ENCODE measurements at regions of chr10 and their contacts with region 1.

Region 1: GRCh38 chr10:17905491-17905890 is 46.2 kb upstream of the SLC39A12 start:
- DNase-seq: no peak
- H3K4me3 Mint-ChIP-seq: no peak overlapping the region
- H3K27ac Mint-ChIP-seq: no peak overlapping the region
- H3K4me1 Mint-ChIP-seq: no peaks in the 10 kb centered on the region
- H3K27me3 Mint-ChIP-seq: no peaks in the 10 kb centered on the region

Region 2: GRCh38 chr10:18214691-18215563 is 309.4 kb after region 1 on chr10:
- intact Hi-C with region 1: loop called (anchors 10 kb)
- DNase-seq: no peak
- H3K4me3 Mint-ChIP-seq: no peak overlapping the region
- H3K27ac Mint-ChIP-seq: no peak overlapping the region
- H3K4me1 Mint-ChIP-seq: no peaks in the 10 kb centered on the region
- H3K27me3 Mint-ChIP-seq: no peaks in the 10 kb centered on the region